ENCODE measurements at regions of chr20 and their contacts with region 1.

Region 1: DNA sequence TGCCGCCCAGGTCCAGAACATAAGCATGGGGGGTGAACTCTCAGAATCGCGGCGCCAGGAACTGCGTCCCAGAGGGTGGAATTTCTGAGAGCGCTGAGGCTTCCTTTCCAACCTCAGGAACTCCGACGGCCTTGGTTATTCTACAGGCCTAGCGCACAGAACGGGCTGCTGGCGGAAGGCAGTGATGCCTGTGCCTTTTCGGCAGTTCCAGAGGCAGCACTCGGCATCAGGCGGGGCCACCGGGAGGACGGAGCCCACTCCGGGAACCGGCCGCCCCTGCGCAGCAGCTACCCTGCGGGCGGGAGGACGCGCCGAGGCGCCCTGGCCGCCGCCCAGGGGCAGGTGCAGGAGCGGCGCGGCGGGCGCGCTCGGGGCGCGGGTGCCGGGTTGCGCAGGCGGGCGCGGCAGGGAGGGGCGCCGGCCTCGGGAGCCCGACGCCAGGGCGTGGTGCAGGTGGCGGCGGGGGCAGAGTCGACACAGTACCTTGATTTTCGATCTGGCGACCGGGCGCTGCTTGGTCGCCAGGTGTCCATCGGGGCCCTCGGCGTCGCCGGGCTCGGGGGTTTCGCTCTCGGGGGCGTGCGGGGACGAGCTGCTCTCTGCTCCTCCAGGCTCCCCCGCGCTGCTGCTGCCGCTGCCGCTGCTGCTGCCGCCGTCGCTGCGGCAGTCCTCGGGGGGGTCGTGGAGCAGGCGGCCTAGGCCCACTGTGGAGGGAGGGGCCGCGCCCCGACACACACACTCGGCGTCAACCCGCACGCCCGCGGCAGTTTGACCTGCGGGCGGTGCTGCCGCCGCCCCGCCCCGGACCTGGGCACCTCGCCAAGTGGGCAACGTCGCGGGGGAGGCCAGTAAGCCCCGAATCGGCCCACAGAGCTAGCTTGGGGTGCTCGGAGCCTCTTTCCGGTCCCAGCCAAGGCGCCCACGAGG is 1.3 kb downstream of the OVOL2 start:
- DNase-seq: no peak
- H3K4me3 Mint-ChIP-seq: peak overlapping the region; percentile 61
- H3K27ac Mint-ChIP-seq: no peak overlapping the region
- H3K4me1 Mint-ChIP-seq: peaks cover 14% of the 10 kb centered on the region
- H3K27me3 Mint-ChIP-seq: peaks cover 67% of the 10 kb centered on the region

Region 2: DNA sequence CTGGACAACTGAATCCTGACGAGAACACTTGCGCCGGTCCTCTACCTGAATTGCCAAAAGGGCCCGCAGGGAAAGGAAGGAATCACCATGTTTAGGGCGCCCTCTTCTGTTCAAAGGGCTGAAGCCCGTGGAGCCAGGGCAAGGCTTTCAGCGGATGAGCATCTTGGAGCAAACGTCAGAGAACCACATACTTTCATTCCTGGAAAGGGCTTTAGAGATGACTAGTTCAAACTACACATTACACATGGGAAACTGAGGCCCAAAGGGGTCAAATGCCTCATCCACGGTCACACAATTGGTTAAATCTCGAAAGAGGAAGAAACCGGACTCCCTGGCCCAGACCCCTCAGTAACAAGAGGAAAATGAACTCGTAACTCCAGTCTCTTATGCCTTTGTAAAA is 220.4 kb after region 1 on chr20:
- CTCF ChIA-PET with region 1: no interaction called
- intact Hi-C with region 1: loop called (anchors 5 kb)
- DNase-seq: peak; percentile 80
- H3K4me3 Mint-ChIP-seq: no peak overlapping the region
- H3K27ac Mint-ChIP-seq: no peak overlapping the region
- H3K4me1 Mint-ChIP-seq: no peaks in the 10 kb centered on the region
- H3K27me3 Mint-ChIP-seq: peaks cover 37% of the 10 kb centered on the region

Measured in activated naive CD4-positive, alpha-beta T cell treated with anti-CD3 and anti-CD28 coated beads for 36 hours (primary cell).